CD14-positive monocyte (primary cell): ENCODE measurements at regions of chrX and their contacts with region 1.

Region 1: GRCh38 chrX:49043220-49043986 is at the start of gene TFE3:
- DNase-seq: peak; percentile 97 to 99 (median 99)
- H3K4me3 ChIP-seq: peak within 1 kb of the TSS; percentile 77 to 91 (median 78)
- H3K4me3 Mint-ChIP-seq: peak within 1 kb of the TSS; percentile 91 to 95
- H3K27ac ChIP-seq: peak within 1 kb of the TSS; percentile 83 to 88
- H3K27ac Mint-ChIP-seq: peak within 1 kb of the TSS; percentile 94 to 97 (median 96)
- H3K4me1 ChIP-seq: peaks cover 31 to 34% of the 10 kb centered on the region in 2 donors
- H3K4me1 Mint-ChIP-seq: peaks cover 42% of the 10 kb centered on the region
- H3K27me3 ChIP-seq: no peaks in the 10 kb centered on the region
- H3K27me3 Mint-ChIP-seq: peaks cover 0 to 13% (median 0%) of the 10 kb centered on the region in 3 donors
- CTCF ChIP-seq: peak; percentile 57
- polyA plus RNA-seq, gene TFE3: 12.8 to 41.2 (median 22.0) TPM

Region 2: GRCh38 chrX:48897621-48898306 is 145.6 kb before region 1 on chrX and contains the starts of genes PQBP1 and TIMM17B:
- intact Hi-C with region 1: loop called in 1 of 2 experiments (anchors 10 kb)
- DNase-seq: peak; percentile 93 to 94 (median 93)
- H3K4me3 ChIP-seq: peak within 1 kb of the TSS; percentile 81 to 98 (median 88)
- H3K4me3 Mint-ChIP-seq: peak within 1 kb of the TSS; percentile 87 to 96
- H3K27ac ChIP-seq: peak within 1 kb of the TSS; percentile 98 to 100
- H3K27ac Mint-ChIP-seq: peak within 1 kb of the TSS; percentile 94 to 100 (median 98)
- H3K4me1 ChIP-seq: peaks cover 19 to 23% of the 10 kb centered on the region in 2 donors
- H3K4me1 Mint-ChIP-seq: peaks cover 15% of the 10 kb centered on the region
- H3K27me3 ChIP-seq: no peaks in the 10 kb centered on the region
- H3K27me3 Mint-ChIP-seq: peaks cover 0 to 6% (median 0%) of the 10 kb centered on the region in 3 donors
- CTCF ChIP-seq: no peak
- polyA plus RNA-seq, gene PQBP1: 71.7 to 129 (median 78.3) TPM
- polyA plus RNA-seq, gene TIMM17B: 52.2 to 86.9 (median 86.8) TPM

Region 3: GRCh38 chrX:48917139-48918001 is 126.0 kb before region 1 on chrX:
- intact Hi-C with region 1: loop called in 1 of 2 experiments (anchors 10 kb)
- DNase-seq: peak; percentile 88 to 97 (median 90)
- H3K4me3 ChIP-seq: peak overlapping the region; percentile 48 to 78 (median 68)
- H3K4me3 Mint-ChIP-seq: peak overlapping the region; percentile 87 to 89
- H3K27ac ChIP-seq: peak overlapping the region; percentile 12 to 19
- H3K27ac Mint-ChIP-seq: peak overlapping the region; percentile 56 to 92 (median 89)
- H3K4me1 ChIP-seq: peaks cover 24 to 27% of the 10 kb centered on the region in 2 donors
- H3K4me1 Mint-ChIP-seq: peaks cover 27% of the 10 kb centered on the region
- H3K27me3 ChIP-seq: no peaks in the 10 kb centered on the region
- H3K27me3 Mint-ChIP-seq: peaks cover 0 to 15% (median 0%) of the 10 kb centered on the region in 3 donors
- CTCF ChIP-seq: peak; percentile 83

Region 4: GRCh38 chrX:48957827-48958634 is 85.4 kb before region 1 on chrX:
- intact Hi-C with region 1: loop called (anchors 5 to 10 kb)
- DNase-seq: peak; percentile 93 to 98 (median 96)
- H3K4me3 ChIP-seq: peak overlapping the region; percentile 44 to 78 (median 48)
- H3K4me3 Mint-ChIP-seq: peak overlapping the region; percentile 83 to 96
- H3K27ac ChIP-seq: peak overlapping the region; percentile 97 to 100
- H3K27ac Mint-ChIP-seq: peak overlapping the region; percentile 100
- H3K4me1 ChIP-seq: peaks cover 49 to 56% of the 10 kb centered on the region in 2 donors
- H3K4me1 Mint-ChIP-seq: peaks cover 52% of the 10 kb centered on the region
- H3K27me3 ChIP-seq: no peaks in the 10 kb centered on the region
- H3K27me3 Mint-ChIP-seq: peaks cover 0 to 8% (median 1%) of the 10 kb centered on the region in 3 donors
- CTCF ChIP-seq: no peak

Region 5: DNA sequence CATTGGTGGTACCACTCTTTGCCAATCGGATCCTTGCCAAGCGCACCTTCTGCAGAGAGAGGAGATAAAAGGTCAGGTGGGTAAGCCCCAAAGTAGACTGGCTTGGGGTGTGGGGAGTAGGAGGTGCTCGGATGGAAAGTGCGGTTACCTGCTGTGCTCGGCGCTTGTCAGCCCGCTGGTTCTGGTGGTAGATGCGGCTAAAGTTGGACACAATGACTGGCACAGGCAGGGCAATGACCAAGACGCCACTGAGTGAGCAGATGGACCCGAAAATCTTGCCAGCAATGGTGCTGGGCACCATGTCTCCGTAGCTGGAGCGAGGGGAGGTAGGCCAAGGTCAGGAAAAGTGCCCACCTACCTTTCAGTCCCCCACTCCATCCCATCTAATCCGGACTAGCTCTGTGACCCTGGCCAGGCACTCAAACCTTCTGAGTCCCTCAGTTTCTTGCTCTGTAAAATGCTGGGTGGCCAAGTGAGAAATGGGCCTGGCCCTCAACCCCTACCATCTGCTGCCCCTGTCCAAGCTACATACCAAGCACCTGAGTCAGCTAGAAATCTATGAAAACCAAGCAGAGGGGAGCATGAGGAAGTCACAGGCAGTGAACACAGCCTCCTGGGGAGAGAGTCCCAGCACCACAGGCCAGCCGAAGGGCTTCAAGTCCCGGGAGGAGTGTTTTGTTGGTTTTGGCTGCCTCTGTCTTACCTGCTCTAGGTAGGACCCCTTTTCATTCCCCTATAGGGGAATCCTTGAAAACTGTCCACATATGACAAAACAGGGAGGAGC is 76.4 kb before region 1 on chrX:
- intact Hi-C with region 1: loop called in 1 of 2 experiments (anchors 10 kb)
- DNase-seq: no peak
- H3K4me3 ChIP-seq: no peak overlapping the region
- H3K4me3 Mint-ChIP-seq: no peak overlapping the region
- H3K27ac ChIP-seq: no peak overlapping the region
- H3K27ac Mint-ChIP-seq: peak overlapping the region in 1 of 7 donors; percentile 20
- H3K4me1 ChIP-seq: peaks cover 7% of the 10 kb centered on the region in 2 donors
- H3K4me1 Mint-ChIP-seq: peaks cover 3% of the 10 kb centered on the region
- H3K27me3 ChIP-seq: peaks cover 0 to 8% of the 10 kb centered on the region in 2 donors
- H3K27me3 Mint-ChIP-seq: peaks cover 2 to 17% (median 16%) of the 10 kb centered on the region in 3 donors
- CTCF ChIP-seq: no peak

Region 6: DNA sequence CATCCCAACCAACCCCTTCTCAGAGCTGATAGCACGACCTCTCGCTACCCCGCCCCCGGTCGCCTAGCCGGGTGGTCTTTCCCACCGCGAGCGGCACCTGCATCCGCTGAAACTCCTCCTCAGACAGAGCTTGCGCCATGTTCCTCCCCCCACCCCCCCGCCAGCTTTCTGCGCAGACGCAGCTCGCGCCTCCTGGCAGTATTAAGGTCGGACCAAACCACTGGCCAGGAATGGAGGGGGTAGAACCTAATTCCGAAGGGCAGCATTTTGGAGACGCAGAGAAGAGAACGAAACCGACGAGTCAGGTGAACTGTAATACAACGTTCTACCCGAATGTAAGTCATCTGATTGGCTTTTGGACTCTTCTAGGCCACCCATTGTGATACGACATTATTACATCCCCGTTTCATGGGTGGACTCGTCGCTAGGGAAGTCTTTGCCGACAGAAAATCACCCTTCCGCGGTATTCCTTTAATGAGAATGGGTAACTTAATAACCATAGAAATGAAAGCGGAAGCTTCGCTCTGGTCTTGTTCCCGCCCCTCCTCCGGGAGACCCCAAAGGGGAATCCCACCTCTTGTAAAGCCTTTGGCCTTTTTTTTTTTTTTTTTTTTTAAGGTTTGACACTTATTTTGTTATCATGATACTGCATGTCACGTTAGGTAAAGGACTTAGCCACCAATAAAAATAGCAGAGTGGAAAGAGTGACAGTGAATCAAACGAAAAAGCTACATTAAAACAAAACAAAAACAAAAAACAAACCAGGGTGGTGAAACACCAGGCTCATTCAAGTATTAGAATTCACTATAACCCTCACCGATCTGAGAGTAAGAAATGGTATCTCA is 41.1 kb before region 1 on chrX and contains the start of gene GRIPAP1:
- intact Hi-C with region 1: loop called (anchors 5 kb)
- DNase-seq: peak; percentile 86 to 95 (median 88)
- H3K4me3 ChIP-seq: peak within 1 kb of the TSS; percentile 59 to 95 (median 85)
- H3K4me3 Mint-ChIP-seq: peak within 1 kb of the TSS; percentile 94 to 97
- H3K27ac ChIP-seq: peak within 1 kb of the TSS; percentile 87 to 97
- H3K27ac Mint-ChIP-seq: peak within 1 kb of the TSS; percentile 98 to 100 (median 99)
- H3K4me1 ChIP-seq: peaks cover 13% of the 10 kb centered on the region in 2 donors
- H3K4me1 Mint-ChIP-seq: peaks cover 17% of the 10 kb centered on the region
- H3K27me3 ChIP-seq: no peaks in the 10 kb centered on the region
- H3K27me3 Mint-ChIP-seq: peaks cover 0 to 2% (median 0%) of the 10 kb centered on the region in 3 donors
- CTCF ChIP-seq: no peak
- polyA plus RNA-seq, gene GRIPAP1: 3.8 to 103 (median 10.7) TPM